AG04449 (cell line): ENCODE measurements at regions of chr6 and their contacts with region 1.

Region 1: GRCh38 chr6:8219352-8219943 is 117.1 kb upstream of the EEF1E1 start:
- DNase-seq: no peak
- H3K4me3 ChIP-seq: no peak overlapping the region
- CTCF ChIP-seq: peak; percentile 66

Region 2: DNA sequence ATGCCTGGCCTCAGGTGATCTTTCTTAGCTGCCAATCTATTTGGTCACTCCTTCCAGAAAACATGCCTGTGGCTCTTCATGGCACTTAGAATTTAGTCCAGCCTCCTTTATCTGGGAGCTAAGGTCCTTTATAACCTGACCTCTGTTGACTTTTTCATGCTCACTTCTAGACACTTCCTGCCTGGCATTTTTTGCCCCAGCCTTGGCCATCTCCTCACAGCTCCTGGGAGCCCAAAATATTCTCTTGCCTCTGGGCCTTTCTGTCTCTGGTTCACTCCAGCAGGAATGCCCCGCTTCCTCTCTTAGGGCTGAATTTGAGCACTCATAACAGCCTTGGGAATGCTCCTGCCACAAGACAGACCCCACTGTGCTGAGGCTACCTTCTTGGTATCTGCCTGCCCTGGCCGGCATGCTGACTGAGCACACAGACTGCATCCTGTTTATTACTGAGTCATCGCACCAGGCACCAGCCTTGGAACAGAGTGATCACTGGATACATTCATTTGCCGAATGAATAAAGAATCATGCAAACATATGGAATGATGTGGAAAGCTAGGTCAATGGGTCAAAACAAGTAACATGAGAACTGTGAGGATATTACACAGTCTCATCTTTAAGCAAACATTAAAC is 111.3 kb before region 1 on chr6:
- CTCF ChIA-PET with region 1: interaction called, 13 read pairs
- POLR2A ChIA-PET with region 1: no interaction called
- DNase-seq: peak; percentile 89
- H3K4me3 ChIP-seq: no peak overlapping the region; the same call in 1 of the 2 replicates
- CTCF ChIP-seq: no peak

Region 3: GRCh38 chr6:8131256-8131897 is 88.1 kb before region 1 on chr6:
- CTCF ChIA-PET with region 1: interaction called, 768 read pairs
- POLR2A ChIA-PET with region 1: interaction called, 5 read pairs
- DNase-seq: no peak
- H3K4me3 ChIP-seq: no peak overlapping the region
- CTCF ChIP-seq: peak; percentile 64

Region 4: GRCh38 chr6:8166156-8166555 is 53.3 kb before region 1 on chr6:
- CTCF ChIA-PET with region 1: interaction called, 15 read pairs
- POLR2A ChIA-PET with region 1: no interaction called
- DNase-seq: no peak
- H3K4me3 ChIP-seq: no peak overlapping the region
- CTCF ChIP-seq: no peak

Region 5: DNA sequence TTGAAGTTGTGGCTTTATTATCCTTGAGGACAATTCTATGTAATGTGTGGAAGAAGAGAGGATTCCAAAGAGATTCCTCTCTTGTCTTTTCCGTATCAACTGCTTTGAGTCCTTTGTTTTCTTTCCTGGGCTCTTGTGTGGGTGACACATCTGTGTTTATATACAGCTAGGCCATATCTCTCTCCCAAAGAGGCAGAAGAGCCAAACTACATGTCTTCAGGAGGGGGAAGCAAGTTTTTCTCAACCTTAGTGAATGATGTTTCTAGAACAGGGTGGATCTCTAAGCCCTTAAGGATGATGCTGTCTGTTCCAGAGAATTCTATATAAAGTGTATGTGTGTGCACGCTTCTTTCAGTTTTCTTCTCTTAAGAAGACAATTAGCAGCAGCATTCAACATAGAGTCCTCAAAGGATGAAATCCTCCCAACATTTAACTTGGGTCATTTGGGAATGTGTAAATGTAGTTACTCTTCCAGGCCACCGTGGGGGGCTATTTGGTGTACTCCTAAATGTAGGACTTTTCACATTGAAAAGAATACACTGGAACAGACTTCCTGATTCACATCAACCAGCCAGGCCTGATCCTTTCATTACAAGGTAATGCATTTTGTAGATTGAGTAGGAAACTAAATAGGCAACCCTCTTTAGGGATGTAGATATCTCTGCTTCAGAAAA is 24.3 kb before region 1 on chr6:
- CTCF ChIA-PET with region 1: interaction called, 33 read pairs
- POLR2A ChIA-PET with region 1: no interaction called
- DNase-seq: no peak
- H3K4me3 ChIP-seq: no peak overlapping the region
- CTCF ChIP-seq: no peak

Region 6: GRCh38 chr6:8229915-8230756 is 10.7 kb after region 1 on chr6:
- CTCF ChIA-PET with region 1: interaction called, 16 read pairs
- POLR2A ChIA-PET with region 1: no interaction called
- DNase-seq: no peak
- H3K4me3 ChIP-seq: no peak overlapping the region
- CTCF ChIP-seq: no peak